ENCODE measurements at regions of chr12 and their contacts with region 1.

Region 1: DNA sequence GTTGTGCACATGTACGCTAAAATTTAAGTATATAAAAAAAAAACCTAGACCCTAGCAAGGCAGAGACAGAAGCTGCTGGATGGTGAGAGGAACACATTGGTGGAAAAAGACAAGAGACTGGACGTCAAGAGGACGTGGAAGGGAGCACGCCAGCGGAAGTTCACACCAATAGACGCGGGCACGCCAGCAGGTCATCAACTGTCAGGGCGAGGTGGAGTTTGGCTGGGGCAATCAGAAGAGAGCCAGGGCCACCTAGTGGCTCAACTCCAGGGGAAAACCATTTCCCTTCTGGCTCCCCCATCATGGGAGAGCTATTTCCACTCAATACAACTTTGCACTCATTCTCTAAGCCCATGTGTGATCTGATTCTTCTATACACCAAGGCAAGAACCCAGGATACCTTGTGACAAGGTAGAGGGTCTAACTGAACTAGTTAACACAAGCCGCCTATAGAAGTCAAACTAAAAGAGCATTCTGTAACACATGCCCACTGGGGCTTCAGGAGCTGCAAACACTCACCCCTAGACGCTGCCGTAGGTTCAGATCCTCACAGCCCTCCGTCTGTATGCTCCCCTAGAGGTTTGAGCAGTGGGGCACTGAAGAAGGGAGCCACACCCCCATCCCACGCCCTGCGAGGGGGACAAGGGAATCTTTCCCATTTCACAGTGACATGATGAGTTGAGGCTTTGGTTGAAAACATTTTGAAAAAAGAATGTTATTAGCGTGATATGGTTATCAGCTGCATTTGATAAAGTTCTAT is 702.7 kb downstream of the TMTC2 start:
- DNase-seq: peak; percentile 38 to 62
- H3K4me3 ChIP-seq: no peak overlapping the region
- H3K27ac ChIP-seq: no peak overlapping the region
- H3K4me1 ChIP-seq: no peaks in the 10 kb centered on the region
- H3K27me3 ChIP-seq: no peaks in the 10 kb centered on the region
- CTCF ChIP-seq: peak; percentile 75 to 84 (median 75)
- EP300 ChIP-seq: no peak
- POLR2A ChIP-seq: no peak
- RAD21 ChIP-seq: peak; percentile 90 to 91

Region 2: GRCh38 chr12:83005534-83006197 is 383.8 kb before region 1 on chr12:
- CTCF ChIA-PET with region 1: interaction called, 23 read pairs
- POLR2A ChIA-PET with region 1: no interaction called
- DNase-seq: no peak
- H3K4me3 ChIP-seq: no peak overlapping the region
- H3K27ac ChIP-seq: no peak overlapping the region
- H3K4me1 ChIP-seq: peaks cover 0 to 11% (median 0%) of the 10 kb centered on the region in 4 experiments; a peak in 1 of 7 replicates
- H3K27me3 ChIP-seq: no peaks in the 10 kb centered on the region
- CTCF ChIP-seq: no peak
- EP300 ChIP-seq: no peak
- POLR2A ChIP-seq: no peak
- RAD21 ChIP-seq: no peak

Region 3: DNA sequence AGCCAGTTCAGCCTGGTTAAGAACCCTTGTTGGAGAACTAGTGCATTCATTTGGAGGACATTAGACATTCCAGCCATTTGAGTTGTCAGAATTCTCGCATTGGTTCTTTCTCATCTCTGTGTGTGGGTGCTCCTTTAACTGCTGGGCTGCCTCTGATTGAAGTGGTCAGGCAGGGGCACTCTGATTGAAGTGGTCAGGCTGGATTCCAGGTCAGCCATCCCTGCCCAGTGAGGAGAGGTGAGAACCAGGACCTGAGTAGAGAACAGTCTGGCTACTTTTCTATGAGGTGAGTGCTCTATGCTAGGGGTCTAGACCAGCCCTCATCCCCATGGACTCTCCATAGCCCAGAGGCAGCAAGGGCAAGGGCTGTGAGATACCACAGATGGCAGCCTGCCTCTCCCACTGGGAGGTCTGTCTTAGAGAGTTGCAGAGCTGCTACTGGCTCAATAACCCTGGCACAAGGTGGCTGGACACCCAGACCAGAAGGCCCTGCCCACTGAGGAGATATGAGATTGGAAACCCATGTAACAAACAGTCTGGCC is 11.2 kb before region 1 on chr12:
- CTCF ChIA-PET with region 1: interaction called, 18 read pairs
- POLR2A ChIA-PET with region 1: no interaction called
- DNase-seq: no peak
- H3K4me3 ChIP-seq: no peak overlapping the region
- H3K27ac ChIP-seq: no peak overlapping the region
- H3K4me1 ChIP-seq: no peaks in the 10 kb centered on the region
- H3K27me3 ChIP-seq: no peaks in the 10 kb centered on the region
- CTCF ChIP-seq: no peak
- EP300 ChIP-seq: no peak
- POLR2A ChIP-seq: no peak
- RAD21 ChIP-seq: no peak